ENCODE measurements at regions of chr18 and their contacts with region 1.

Region 1: GRCh38 chr18:44178476-44178875 is 502.2 kb upstream of the SETBP1 start:
- DNase-seq: no peak
- H3K4me3 ChIP-seq: no peak overlapping the region
- H3K27ac ChIP-seq: no peak overlapping the region
- H3K4me1 ChIP-seq: no peaks in the 10 kb centered on the region
- H3K27me3 ChIP-seq: no peaks in the 10 kb centered on the region
- CTCF ChIP-seq: no peak
- POLR2A ChIP-seq: no peak

Region 2: DNA sequence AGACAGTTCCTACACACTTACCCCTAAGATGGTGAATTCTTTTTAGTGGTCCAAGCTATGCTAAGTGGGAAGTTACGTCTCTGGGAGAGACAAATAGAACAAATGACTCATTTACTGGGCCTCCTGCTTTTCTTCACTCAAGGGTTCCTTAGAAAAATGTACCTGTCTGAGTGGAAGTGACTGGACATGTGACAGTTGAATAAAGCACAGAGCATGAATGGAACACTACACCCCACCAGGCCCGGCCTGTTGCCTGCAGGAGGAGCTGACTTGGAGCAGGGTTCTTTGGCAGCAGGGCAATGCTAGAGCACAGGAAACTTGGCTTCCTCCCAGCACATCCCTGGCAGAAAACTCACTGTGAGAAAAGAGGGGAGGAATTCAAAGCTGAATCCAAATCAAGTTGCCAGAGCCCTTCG is 51.2 kb after region 1 on chr18:
- CTCF ChIA-PET with region 1: no interaction called
- POLR2A ChIA-PET with region 1: no interaction called
- dilution Hi-C with region 1: no loop called
- intact Hi-C with region 1: loop called (anchors 10 kb)
- DNase-seq: peak; percentile 36
- H3K4me3 ChIP-seq: no peak overlapping the region
- H3K27ac ChIP-seq: no peak overlapping the region
- H3K4me1 ChIP-seq: no peaks in the 10 kb centered on the region
- H3K27me3 ChIP-seq: no peaks in the 10 kb centered on the region
- CTCF ChIP-seq: no peak
- POLR2A ChIP-seq: no peak